ENCODE measurements at regions of chr11 and their contacts with region 1.

Region 1: GRCh38 chr11:62309991-62310390 is 11.1 kb upstream of the SCGB1D4 start:
- DNase-seq: no peak
- H3K4me3 Mint-ChIP-seq: no peak overlapping the region
- H3K27ac Mint-ChIP-seq: no peak overlapping the region
- H3K4me1 Mint-ChIP-seq: peaks cover 8% of the 10 kb centered on the region
- H3K27me3 Mint-ChIP-seq: peaks cover 48% of the 10 kb centered on the region

Region 2: DNA sequence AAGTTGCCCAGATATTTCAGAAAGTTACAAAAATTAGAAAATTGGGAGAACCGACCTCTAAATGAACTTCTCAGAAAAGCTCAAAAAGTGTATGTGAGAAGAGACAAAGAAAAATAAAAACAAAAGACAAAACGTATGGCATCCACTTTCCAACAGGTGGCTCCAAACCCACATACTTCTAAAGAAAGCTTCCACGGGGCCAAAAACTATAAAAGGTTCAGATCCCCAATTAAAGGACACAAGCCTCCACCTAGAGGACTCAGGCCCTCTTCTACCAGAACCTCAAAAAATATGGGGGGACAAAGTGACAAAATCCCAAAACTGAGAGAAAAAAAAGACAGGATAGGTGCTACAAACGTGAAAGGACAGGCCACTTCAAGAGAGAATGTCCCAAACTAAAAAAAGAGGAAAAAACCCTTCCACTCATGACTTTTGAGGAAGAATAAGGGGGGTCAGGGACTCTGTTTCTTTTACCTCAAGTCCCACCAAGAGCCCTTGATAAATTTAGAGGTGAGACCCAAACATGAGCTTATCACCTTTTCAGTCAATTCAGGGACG is 92.7 kb before region 1 on chr11:
- intact Hi-C with region 1: loop called (anchors 5 kb)
- DNase-seq: no peak
- H3K4me3 Mint-ChIP-seq: no peak overlapping the region
- H3K27ac Mint-ChIP-seq: no peak overlapping the region
- H3K4me1 Mint-ChIP-seq: no peaks in the 10 kb centered on the region
- H3K27me3 Mint-ChIP-seq: peaks cover 26% of the 10 kb centered on the region

Region 3: DNA sequence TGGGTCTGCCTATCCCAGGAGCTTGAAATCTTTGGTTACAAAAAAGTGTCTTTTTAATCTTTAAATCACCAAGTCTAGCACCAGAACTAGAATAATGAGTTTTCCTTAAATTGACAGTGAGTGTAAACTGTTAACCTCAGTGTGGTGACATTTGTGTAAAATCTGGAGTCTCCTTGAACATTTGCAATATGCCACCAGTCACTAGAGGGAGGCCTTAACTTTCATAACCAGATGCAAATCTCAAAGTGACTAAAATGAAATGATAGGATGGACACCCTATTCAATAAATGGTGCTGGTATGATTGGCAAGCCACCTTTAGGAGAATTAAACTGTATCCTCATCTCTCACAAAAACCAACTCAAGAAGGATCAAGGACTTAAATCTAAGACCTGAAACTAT is 76.3 kb before region 1 on chr11:
- intact Hi-C with region 1: loop called (anchors 5 kb)
- DNase-seq: no peak
- H3K4me3 Mint-ChIP-seq: no peak overlapping the region
- H3K27ac Mint-ChIP-seq: no peak overlapping the region
- H3K4me1 Mint-ChIP-seq: no peaks in the 10 kb centered on the region
- H3K27me3 Mint-ChIP-seq: peaks cover 33% of the 10 kb centered on the region

Region 4: DNA sequence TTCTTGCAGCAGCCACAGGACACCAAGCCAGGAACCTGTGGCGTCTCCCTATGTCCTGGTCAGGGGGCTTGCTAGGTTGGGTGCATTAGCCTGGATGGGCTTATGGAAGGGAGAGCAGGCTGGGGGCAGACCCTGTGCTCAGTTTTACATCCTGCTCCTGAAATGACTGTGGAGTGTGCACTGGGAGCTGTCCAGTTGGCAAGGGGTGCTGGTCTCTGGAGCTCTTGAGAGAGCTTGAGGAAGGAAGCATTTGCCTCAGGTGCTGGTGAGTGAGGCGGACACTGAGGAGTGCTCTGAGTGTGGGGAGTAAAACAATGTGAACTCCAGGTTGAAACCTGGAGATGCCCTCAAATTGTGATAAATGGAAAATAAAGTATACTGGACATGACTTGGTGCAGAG is 14.5 kb before region 1 on chr11:
- intact Hi-C with region 1: no loop called
- DNase-seq: peak; percentile 57
- H3K4me3 Mint-ChIP-seq: no peak overlapping the region
- H3K27ac Mint-ChIP-seq: no peak overlapping the region
- H3K4me1 Mint-ChIP-seq: no peaks in the 10 kb centered on the region
- H3K27me3 Mint-ChIP-seq: peaks cover 14% of the 10 kb centered on the region

Measured in activated CD4-positive, alpha-beta T cell treated with anti-CD3 and anti-CD28 coated beads, Interleukin-2, amount 10 ng/mL, durations not matched to agents 24 days and 14 days (primary cell).